Upper lobe of right lung (tissue), 1 donor: ENCODE measurements at regions of chr6 and their contacts with region 1.

Region 1: GRCh38 chr6:56699066-56699654 is 56.5 kb upstream of the DST start:
- DNase-seq: no peak
- ATAC-seq: peak; percentile 67
- H3K4me3 ChIP-seq: no peak overlapping the region
- H3K27ac ChIP-seq: no peak overlapping the region
- H3K4me1 ChIP-seq: no peaks in the 10 kb centered on the region
- H3K27me3 ChIP-seq: no peaks in the 10 kb centered on the region
- CTCF ChIP-seq: peak; percentile 62

Region 2: DNA sequence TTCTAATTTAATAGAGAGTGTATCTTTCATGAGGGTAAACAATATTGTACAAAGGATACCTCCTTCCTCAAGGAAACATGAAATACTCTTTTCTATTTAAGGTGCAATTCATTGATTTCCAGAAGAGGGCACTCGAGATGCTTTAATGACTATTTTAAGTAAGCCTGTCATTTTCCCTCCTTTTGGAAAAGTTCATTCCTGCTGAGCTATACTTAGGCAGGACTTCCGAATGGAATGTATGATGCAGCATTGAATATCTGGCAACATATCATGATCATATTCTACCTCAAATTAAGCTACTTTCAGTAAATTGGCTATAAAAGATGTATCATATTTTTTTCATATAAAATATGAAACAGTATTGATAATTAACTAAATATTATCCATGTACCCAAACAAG is 61.5 kb before region 1 on chr6:
- intact Hi-C with region 1: loop called (anchors 5 kb)
- DNase-seq: no peak
- ATAC-seq: peak; percentile 59
- H3K4me3 ChIP-seq: no peak overlapping the region
- H3K27ac ChIP-seq: no peak overlapping the region
- H3K4me1 ChIP-seq: no peaks in the 10 kb centered on the region
- H3K27me3 ChIP-seq: no peaks in the 10 kb centered on the region
- CTCF ChIP-seq: peak; percentile 69